PC-9 (cell line): ENCODE measurements at regions of chr6 and their contacts with region 1.

Region 1: GRCh38 chr6:44387346-44388133 is at the start of gene CDC5L:
- DNase-seq: peak; percentile 94 to 95
- H3K4me3 ChIP-seq: peak within 1 kb of the TSS; percentile 58
- H3K27ac ChIP-seq: peak within 1 kb of the TSS; percentile 64
- H3K4me1 ChIP-seq: peaks cover 20% of the 10 kb centered on the region
- H3K27me3 ChIP-seq: 0 out of 2 replicates have a peak, but pooled peaks cover 5% of the 10 kb centered on the region
- CTCF ChIP-seq: no peak
- total RNA-seq, gene CDC5L: 17.8 and 24.0 TPM in 2 replicates

Region 2: GRCh38 chr6:43838276-43839036 is 549.1 kb before region 1 on chr6:
- CTCF ChIA-PET with region 1: no interaction called
- POLR2A ChIA-PET with region 1: no interaction called
- intact Hi-C with region 1: no loop called
- DNase-seq: peak; percentile 39 to 57
- H3K4me3 ChIP-seq: no peak overlapping the region; the same call in 1 of the 2 replicates
- H3K27ac ChIP-seq: peak overlapping the region; percentile 73
- H3K4me1 ChIP-seq: peaks cover 36% of the 10 kb centered on the region
- H3K27me3 ChIP-seq: no peaks in the 10 kb centered on the region
- CTCF ChIP-seq: peak; percentile 85

Region 3: GRCh38 chr6:44201638-44202303 is 185.8 kb before region 1 on chr6:
- CTCF ChIA-PET with region 1: no interaction called
- POLR2A ChIA-PET with region 1: interaction called, 13 read pairs
- intact Hi-C with region 1: no loop called
- DNase-seq: no peak
- H3K4me3 ChIP-seq: no peak overlapping the region
- H3K27ac ChIP-seq: no peak overlapping the region
- H3K4me1 ChIP-seq: peaks cover 31% of the 10 kb centered on the region
- H3K27me3 ChIP-seq: no peaks in the 10 kb centered on the region
- CTCF ChIP-seq: no peak

Region 4: DNA sequence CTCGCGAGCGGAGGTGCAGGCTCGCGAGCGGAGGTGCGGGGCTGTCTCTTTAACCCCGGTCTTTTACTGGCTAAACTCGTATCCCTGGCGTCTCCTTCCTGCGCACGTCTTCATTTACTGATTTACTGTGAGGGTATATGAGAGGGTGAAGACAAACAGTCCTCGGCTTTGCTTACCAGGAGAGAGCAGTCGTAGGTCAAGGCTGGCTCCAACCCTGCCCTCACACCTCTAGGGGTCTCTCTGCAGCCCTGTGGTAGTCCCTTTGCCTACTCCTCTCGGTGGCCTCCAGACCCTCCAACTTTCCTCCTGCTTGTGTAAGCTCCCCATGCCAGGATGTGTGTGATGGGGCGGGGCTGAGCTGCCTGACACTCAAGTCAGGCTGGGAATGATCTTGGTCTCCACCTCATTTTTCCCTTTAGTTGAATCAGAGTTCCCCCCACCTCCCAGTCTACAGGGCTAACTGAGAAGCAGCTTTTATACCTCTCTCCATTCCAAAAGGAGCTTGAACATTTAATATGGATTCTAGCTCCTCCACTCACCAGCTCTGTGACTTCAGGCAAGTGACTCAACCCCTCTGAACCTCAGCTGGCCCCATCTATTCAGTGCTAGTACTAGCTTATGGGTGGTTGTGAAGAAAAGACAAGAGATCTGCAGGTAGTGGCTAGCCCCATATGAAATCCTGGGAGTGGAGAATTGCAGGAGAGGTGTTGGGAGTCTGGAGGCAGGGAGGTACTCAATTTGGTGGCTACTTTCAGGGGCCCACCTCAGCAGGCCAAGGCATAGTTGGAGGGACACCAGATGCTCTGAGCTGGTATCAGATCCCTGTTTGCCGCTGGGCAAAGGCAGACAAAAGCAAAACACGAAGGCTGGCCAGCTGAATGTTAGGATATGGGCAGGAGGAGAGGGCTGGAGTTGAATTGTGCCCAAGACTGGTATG is 163.2 kb before region 1 on chr6:
- CTCF ChIA-PET with region 1: no interaction called
- POLR2A ChIA-PET with region 1: no interaction called
- intact Hi-C with region 1: no loop called
- DNase-seq: no peak
- H3K4me3 ChIP-seq: peak overlapping the region; percentile 57
- H3K27ac ChIP-seq: no peak overlapping the region
- H3K4me1 ChIP-seq: peaks cover 21% of the 10 kb centered on the region
- H3K27me3 ChIP-seq: no peaks in the 10 kb centered on the region
- CTCF ChIP-seq: 0 out of 2 replicates have a peak, but pooled peaks have one; percentile 20